IMR-90 (cell line): ENCODE measurements at regions of chr3 and their contacts with region 1.

Region 1: GRCh38 chr3:73432023-73432705 is 192.6 kb downstream of the PDZRN3 start:
- DNase-seq: peak; percentile 54
- ATAC-seq: peak; percentile 49; the same call in 1 of the 2 replicates
- H3K4me3 ChIP-seq: no peak overlapping the region
- H3K27ac ChIP-seq: no peak overlapping the region
- H3K4me1 ChIP-seq: no peaks in the 10 kb centered on the region; the same call in none of the 2 replicates
- H3K27me3 ChIP-seq: no peaks in the 10 kb centered on the region; the same call in 1 of the 2 replicates
- CTCF ChIP-seq: peak; percentile 68
- POLR2A ChIP-seq: no peak
- RAD21 ChIP-seq: peak; percentile 65

Region 2: GRCh38 chr3:73100741-73101559 is 331.2 kb before region 1 on chr3:
- CTCF ChIA-PET with region 1: no interaction called
- POLR2A ChIA-PET with region 1: no interaction called
- dilution Hi-C with region 1: no loop called
- in situ Hi-C with region 1: loop called (anchors 5 kb)
- intact Hi-C with region 1: loop called (anchors 1 kb)
- DNase-seq: peak; percentile 75
- ATAC-seq: peak; percentile 99
- H3K4me3 ChIP-seq: no peak overlapping the region
- H3K27ac ChIP-seq: no peak overlapping the region
- H3K4me1 ChIP-seq: no peaks in the 10 kb centered on the region
- H3K27me3 ChIP-seq: peaks cover 9% of the 10 kb centered on the region
- CTCF ChIP-seq: peak; percentile 87
- POLR2A ChIP-seq: no peak
- RAD21 ChIP-seq: peak; percentile 90

Region 3: DNA sequence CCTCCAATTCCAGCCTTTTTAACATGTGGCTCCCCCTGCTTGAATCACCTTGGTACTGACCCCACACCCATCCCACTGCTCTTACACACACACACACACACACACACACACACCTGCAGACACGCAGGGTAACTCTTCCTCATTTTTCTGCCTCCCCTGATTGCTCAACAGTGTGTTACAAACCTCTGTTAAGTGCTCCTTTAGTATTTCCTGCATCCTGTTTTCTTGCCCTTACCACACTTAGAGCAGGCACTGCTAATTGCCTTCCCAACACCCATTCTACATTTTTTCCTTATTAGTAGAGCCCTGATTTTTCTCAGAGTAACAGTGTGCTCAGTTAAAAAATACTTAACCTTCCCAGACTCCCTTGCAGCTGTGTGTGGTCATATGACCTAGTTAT is 186.7 kb before region 1 on chr3:
- CTCF ChIA-PET with region 1: no interaction called
- POLR2A ChIA-PET with region 1: no interaction called
- dilution Hi-C with region 1: no loop called
- in situ Hi-C with region 1: no loop called
- intact Hi-C with region 1: loop called (anchors 10 kb)
- DNase-seq: no peak
- ATAC-seq: no peak
- H3K4me3 ChIP-seq: no peak overlapping the region
- H3K27ac ChIP-seq: no peak overlapping the region
- H3K4me1 ChIP-seq: no peaks in the 10 kb centered on the region
- H3K27me3 ChIP-seq: no peaks in the 10 kb centered on the region
- CTCF ChIP-seq: no peak
- POLR2A ChIP-seq: no peak
- RAD21 ChIP-seq: no peak

Region 4: DNA sequence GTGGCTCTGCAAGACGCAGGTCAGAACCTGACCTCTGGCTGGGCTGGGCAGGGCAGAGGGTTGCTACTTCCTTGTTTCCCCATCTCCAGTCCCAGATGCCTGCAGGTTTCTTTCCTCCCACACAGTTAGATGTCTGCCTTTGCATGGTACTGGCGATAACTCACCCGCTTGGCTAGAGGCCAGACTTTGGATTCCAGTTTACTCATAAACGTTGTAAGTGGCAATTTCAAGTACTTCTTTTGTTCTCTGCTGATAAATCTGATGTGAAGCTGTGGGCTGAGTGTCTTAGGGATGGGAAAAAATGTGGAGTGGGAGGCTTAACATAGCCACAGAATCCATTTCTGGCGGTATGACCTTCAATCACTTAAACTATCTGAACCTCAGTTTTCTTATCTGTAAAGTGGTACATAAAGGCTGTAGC is 176.5 kb before region 1 on chr3:
- CTCF ChIA-PET with region 1: no interaction called
- POLR2A ChIA-PET with region 1: no interaction called
- dilution Hi-C with region 1: no loop called
- in situ Hi-C with region 1: no loop called
- intact Hi-C with region 1: no loop called
- DNase-seq: peak; percentile 66
- ATAC-seq: no peak
- H3K4me3 ChIP-seq: no peak overlapping the region
- H3K27ac ChIP-seq: no peak overlapping the region
- H3K4me1 ChIP-seq: no peaks in the 10 kb centered on the region
- H3K27me3 ChIP-seq: peaks cover 2% of the 10 kb centered on the region; the same call in 1 of the 2 replicates
- CTCF ChIP-seq: no peak
- POLR2A ChIP-seq: no peak
- RAD21 ChIP-seq: no peak